ENCODE measurements at regions of chr11 and their contacts with region 1.

Region 1: GRCh38 chr11:61187505-61188130 is 15.7 kb upstream of the PGA3 start:
- DNase-seq: peak; percentile 91
- H3K4me3 ChIP-seq: no peak overlapping the region
- H3K27ac ChIP-seq: no peak overlapping the region
- H3K4me1 ChIP-seq: no peaks in the 10 kb centered on the region
- H3K27me3 ChIP-seq: no peaks in the 10 kb centered on the region
- CTCF ChIP-seq: peak; percentile 95

Region 2: GRCh38 chr11:60860943-60861342 is 326.7 kb before region 1 on chr11:
- CTCF ChIA-PET with region 1: no interaction called
- POLR2A ChIA-PET with region 1: no interaction called
- intact Hi-C with region 1: no loop called
- DNase-seq: peak; percentile 33
- H3K4me3 ChIP-seq: no peak overlapping the region
- H3K27ac ChIP-seq: no peak overlapping the region
- H3K4me1 ChIP-seq: no peaks in the 10 kb centered on the region
- H3K27me3 ChIP-seq: no peaks in the 10 kb centered on the region
- CTCF ChIP-seq: no peak

Region 3: DNA sequence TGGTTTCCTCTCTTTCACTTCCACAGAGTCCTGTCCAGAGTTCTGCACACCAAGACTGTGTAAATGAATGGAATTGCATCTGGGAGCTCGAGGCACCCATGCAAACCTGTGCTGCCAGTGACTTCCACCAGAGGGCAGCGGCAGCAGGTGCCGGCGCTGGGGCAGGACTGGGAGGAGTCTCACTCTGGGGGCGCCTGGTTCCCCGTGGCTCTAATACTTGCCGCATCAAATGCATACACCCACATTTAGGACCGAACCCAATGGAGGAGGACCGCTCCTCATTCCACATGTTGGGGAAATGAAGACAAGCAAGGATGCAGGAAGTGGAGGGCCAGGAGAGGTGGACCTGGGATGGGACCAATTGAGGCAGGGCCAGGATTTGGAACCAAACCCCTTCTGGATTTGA is 217.2 kb before region 1 on chr11:
- CTCF ChIA-PET with region 1: no interaction called
- POLR2A ChIA-PET with region 1: no interaction called
- intact Hi-C with region 1: loop called (anchors 1 kb)
- DNase-seq: peak; percentile 70
- H3K4me3 ChIP-seq: no peak overlapping the region
- H3K27ac ChIP-seq: no peak overlapping the region
- H3K4me1 ChIP-seq: no peaks in the 10 kb centered on the region
- H3K27me3 ChIP-seq: no peaks in the 10 kb centered on the region
- CTCF ChIP-seq: peak; percentile 99

Region 4: DNA sequence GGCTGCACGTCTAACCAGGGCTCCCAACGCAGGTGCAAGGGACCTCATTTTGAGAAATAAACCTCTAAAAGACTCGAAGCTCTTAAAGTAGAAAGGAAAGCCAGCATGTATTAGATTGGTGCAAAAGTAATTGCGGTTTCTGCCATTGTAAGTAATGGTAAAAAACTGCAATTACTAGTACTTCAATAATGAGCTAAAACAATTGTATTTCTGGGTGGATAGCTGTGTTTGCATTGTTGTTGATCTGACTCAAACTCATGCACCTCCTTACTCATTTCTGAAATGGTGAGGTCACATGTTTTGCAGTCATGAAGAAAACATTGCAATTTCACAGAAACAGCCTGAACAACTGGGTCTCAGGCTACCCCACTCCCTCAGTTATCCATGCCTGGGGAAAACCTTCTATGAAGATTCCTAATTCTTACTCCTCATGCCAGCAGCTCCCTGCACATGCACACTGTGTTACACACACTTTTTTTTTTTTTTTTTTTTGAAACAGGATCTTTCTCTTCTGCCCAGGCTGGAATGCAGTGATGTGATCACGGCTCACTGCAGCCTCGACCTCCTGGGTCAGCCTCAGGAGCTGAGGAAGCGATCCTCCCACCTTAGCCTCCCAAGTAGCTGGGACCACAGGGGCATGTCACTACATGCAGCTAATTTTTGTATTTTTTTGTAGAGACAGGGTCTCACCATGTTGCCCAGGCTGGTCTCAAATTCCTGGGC is 82.9 kb after region 1 on chr11:
- CTCF ChIA-PET with region 1: no interaction called
- POLR2A ChIA-PET with region 1: no interaction called
- intact Hi-C with region 1: no loop called
- DNase-seq: no peak
- H3K4me3 ChIP-seq: no peak overlapping the region
- H3K27ac ChIP-seq: no peak overlapping the region
- H3K4me1 ChIP-seq: no peaks in the 10 kb centered on the region
- H3K27me3 ChIP-seq: no peaks in the 10 kb centered on the region
- CTCF ChIP-seq: no peak

Region 5: DNA sequence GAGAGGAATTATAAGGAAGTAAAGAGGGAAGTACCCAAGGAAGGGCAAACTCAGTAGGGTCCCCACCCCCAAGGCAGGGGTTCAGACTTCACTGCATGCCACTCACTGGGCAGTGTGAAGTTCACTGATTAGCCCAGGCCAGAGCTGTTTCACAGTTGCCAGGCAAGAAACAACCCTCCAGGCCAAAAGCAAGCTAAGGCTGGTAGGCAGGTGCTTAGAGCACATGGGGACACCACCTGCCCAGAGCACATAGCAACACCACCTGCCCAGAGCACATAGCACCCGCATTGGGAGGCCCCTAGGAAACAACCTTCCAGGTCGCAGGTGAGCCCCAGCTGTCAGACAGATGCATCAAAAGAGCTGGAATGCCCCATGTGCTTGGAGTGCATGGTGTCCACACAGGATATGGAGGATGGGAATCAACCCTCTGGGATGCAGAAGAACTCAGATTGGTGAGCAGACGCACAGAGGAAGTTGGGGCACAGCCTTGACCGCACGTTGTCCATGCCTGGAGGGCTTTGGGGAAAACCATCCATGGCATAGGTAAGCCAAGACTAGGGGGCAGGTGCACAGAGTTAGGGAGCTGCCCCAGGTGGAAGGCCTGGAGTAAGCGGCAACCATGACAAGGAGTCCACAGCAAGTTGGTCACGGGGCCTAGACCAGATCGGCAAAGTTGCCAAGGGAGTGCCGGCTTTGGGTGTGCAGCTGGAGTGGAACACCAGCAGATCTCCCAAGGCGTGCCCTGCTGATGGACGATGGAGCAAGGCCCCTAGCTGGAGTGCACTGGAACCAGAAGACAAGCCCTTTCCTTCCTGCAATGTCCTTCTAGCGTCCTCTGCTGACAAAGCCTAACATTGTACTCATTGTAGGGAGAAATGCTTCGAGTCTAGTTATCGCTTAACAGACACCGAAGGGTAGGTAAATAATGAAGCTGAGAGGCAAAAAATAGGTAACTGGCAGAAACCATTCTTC is 196.9 kb after region 1 on chr11:
- CTCF ChIA-PET with region 1: no interaction called
- POLR2A ChIA-PET with region 1: no interaction called
- intact Hi-C with region 1: loop called (anchors 5 kb)
- DNase-seq: peak; percentile 50
- H3K4me3 ChIP-seq: no peak overlapping the region
- H3K27ac ChIP-seq: no peak overlapping the region
- H3K4me1 ChIP-seq: no peaks in the 10 kb centered on the region
- H3K27me3 ChIP-seq: no peaks in the 10 kb centered on the region
- CTCF ChIP-seq: peak; percentile 45

Measured in A673 (cell line).